BJ (cell line): ENCODE measurements at regions of chr14 and their contacts with region 1.

Region 1: GRCh38 chr14:101823511-101824120 is 62.1 kb downstream of the PPP2R5C start:
- DNase-seq: no peak
- H3K4me3 ChIP-seq: no peak overlapping the region
- H3K27me3 ChIP-seq: no peaks in the 10 kb centered on the region
- CTCF ChIP-seq: no peak

Region 2: DNA sequence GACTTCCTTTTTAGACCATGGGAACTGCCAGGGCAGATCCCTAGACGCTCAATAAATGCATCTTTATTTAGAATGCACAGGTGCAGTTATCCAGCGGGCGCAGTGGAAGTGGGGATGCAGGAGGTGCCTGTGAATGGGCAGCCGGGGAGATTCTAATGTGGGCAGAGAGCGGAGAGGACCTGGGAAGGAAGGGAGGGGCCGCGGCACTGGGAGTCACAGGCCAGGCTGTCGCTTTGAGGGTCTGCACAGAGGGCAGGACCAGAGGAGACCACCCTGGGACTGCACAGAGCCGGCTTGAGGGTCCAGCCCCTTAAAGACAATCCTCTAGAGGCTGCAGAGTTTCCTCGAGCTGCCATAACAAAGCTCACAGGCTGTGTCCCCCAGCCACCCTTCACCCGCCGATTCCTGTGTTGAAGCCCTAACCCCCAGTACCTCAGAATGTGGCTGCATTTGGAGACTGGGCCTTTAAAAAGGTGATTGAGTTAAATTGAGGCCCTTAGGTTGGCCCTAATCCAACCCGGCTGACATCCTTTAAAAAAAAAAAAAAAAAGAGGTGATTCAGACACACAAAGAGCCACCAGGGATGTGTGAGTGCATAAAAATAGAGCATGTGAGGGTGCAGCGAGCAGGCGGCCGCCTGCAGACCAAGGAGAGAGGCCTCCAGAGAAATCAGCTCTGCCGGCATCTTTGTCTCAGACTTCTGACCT is 106.5 kb before region 1 on chr14:
- CTCF ChIA-PET with region 1: no interaction called
- POLR2A ChIA-PET with region 1: no interaction called
- DNase-seq: no peak
- H3K4me3 ChIP-seq: no peak overlapping the region
- H3K27me3 ChIP-seq: peaks cover 3% of the 10 kb centered on the region; the same call in 1 of the 2 replicates
- CTCF ChIP-seq: no peak

Region 3: DNA sequence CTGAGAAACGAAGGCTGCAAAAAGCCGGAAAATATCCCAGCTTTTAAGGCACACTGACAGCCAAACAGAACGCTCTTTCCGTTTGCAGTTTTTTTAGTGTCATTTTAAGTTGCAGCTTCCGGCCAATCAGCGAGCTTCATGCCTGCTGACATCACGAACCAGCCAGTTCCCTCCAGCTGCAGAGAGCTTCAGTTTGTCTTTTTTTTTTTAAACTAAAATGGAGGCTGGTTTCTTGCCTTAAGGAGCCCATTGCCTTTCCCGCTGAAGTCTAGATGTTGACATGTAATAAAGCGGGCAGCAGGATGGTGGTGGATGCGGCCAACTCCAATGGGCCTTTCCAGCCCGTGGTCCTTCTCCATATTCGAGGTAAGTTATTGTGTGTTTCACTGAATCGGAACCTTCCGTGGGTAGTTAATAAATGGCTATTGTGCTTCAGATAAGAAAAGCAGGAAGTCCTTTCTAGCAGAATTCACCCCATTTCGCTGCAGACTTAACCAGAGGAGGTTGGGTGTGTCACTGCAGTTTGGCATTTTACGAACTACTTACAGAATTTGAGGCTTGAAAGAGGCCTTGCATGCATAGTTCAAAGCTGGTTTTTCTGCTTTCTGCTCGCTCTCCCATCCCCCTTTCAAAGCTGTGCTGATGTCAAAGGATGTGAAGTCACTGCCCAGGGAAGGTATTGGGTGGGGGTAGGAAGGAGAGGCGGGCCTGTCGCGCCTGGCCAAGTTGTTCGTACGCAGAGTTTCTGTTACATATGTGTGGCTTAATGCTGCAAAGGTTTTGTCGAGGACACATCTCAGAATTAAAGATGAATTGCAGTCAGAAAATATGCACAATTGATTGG is 13.7 kb before region 1 on chr14:
- CTCF ChIA-PET with region 1: interaction called, 4 read pairs
- POLR2A ChIA-PET with region 1: interaction called, 10 read pairs
- DNase-seq: peak; percentile 79
- H3K4me3 ChIP-seq: peak overlapping the region; percentile 67
- H3K27me3 ChIP-seq: no peaks in the 10 kb centered on the region
- CTCF ChIP-seq: no peak